ENCODE measurements at regions of chr1 and their contacts with region 1.

Region 1: DNA sequence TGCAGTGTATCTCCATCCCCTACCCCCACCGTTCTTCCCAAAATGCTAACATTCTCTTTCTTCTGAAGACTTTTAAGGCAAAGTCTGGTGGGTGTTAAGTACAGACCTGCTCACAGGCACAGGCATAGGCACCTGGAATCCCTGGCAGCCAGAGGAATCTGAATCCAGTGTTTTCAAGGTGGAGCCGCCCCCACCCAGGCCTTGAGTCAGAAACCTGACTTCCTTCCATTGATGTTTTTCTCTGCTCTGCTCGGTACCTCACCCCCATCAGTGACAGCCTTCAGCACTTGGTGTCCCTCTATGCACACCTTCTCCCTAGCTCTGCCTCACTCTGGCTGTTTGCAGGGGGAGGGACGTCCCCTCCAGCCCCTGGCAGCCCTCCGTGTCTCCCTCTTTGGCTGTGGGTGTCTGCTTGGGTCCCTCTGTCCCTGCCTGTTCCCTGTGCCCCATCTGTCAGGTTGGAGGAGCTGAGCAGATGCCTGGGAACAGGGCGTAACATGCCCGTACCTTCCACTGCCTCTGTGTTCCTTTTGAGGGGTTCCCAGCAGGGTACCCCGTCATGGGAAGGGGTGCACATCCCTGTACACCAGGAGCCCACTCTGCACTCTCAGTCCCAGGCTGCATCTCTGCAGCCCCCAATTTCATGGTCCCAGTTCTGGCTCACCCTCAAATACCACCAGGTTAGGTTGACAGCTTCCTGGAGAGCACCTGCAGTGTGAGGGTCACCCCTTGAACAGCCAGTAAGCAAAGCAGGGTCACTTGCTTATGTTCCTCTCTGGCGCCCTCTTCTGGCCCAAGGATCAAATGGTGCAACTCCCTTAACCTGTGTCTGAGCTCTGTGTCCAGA is 6.7 kb downstream of the NCDN start:
- DNase-seq: peak; percentile 86
- ATAC-seq: peak; percentile 37 to 53

Region 2: DNA sequence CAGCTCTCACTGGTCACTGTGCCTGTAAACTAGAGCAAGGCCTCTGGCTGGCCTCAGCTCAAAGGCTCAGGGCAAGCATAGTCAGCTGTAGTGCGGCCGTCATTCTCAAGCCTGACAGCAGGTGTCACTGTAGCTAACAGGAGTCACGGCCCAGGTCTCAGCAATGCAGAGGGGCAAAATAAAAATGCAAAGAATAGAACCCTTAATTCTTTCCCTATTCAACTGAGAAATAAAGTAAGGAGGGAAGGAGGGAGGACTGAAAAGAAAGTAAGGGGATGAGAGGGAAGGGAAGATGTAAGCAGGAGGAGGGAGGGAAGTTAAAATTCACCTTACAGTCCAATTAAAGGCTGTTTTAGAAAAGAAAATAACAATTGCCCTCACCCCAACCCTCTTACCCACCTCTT is 113.1 kb before region 1 on chr1:
- intact Hi-C with region 1: loop called (anchors 5 kb)
- DNase-seq: peak; percentile 83
- ATAC-seq: peak; percentile 85 to 88

Region 3: DNA sequence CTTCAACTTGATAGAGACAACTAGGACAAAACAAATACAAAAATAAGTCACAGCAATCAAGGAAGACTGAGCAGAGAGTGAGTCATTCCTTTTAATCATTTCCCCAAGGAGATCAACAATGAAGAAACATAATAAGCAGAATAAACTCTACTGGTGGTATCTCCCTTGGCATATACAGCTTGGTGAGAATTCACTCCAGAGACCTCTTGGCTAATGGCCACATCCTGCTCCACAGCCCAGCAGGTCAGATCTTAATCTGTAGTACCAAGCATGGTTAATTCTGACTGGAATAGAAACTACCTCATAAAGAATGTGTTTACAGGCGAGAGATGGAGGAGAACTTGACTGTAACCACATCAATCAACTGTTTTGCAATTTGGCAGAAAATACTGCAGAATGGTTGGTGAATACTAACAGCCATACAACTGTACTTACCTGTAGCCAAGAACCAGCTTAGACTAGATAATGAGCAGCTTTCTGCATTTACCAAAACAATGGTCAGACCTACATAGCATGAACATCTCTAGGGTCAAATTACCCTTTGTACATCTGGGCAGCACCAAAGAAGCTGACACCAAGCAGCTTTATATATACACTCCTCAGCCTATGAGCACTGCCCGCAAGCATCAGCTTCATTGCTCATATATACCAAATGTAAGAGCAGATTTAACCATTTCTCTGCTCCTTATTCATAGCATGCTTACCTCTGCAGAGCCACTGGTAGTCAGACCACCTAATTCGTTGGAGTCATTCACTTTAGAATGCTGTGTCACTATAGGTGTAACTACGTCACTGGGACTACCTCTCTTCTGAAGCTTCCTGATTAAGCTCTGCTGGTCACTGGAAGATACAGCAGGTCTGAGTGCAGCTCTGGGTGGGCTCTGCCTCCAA is 58.1 kb before region 1 on chr1:
- intact Hi-C with region 1: no loop called
- DNase-seq: peak; percentile 27
- ATAC-seq: peak; percentile 67 to 77

Region 4: DNA sequence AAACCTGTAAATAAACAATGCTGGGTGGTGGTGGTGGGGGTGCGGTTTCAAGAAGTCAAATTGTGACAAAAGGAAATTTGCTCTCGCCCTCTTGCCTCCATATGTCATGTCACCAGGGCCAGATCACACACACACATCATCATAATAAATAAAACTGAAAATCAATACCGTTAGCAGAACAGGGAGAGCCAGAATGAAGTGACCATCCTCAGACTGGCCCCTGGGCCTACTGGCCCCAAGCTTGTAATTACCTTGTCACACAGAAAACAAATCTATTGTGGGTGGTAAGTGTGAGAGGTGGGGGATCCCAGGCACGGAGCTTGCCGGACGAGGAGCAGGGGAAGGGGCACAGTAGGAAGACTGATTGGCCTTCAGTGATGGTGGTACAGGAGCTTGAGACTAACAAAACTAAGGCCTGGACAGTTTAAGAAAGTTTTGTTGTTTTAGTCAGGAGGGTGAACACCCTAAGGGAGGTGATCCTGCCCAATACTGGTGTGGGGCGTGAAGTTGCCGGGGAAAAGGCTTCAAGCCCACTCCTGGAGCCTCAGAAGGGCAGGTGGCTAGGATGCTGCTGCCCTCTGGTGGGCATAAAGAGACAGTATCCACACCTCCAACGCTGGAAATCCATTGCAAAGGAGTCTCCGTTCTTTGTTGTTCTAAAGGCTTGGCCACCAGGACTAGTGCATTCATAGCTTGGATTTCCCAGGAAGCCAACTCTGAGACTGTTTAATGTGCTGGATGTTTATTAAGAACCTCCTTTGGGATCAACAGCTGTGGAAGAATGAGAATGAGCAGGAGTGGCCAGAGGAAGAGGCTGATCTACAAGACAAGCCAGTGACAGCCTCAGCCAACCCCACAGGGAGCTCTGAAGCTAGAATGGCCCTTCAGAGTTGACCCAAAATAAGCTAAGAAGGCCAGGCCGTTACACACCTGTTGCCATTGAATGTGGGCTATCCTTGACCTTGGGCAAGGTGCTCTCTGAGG is 162.5 kb after region 1 on chr1:
- intact Hi-C with region 1: loop called (anchors 2 to 5 kb)
- DNase-seq: peak; percentile 61
- ATAC-seq: peak; percentile 89 to 91

Region 5: GRCh38 chr1:35769759-35770446 is 205.6 kb after region 1 on chr1 and contains the start of gene CLSPN:
- intact Hi-C with region 1: loop called in 1 of 2 experiments (anchors 2 kb)
- DNase-seq: peak; percentile 96
- ATAC-seq: peak; percentile 99 to 100
- total RNA-seq, gene CLSPN: 1.5 to 1.9 TPM

Measured in left cardiac atrium (tissue), 4 donors.